Mammary epithelial cell (primary cell): ENCODE measurements at regions of chr2 and their contacts with region 1.

Region 1: GRCh38 chr2:216047397-216047796 is 34.0 kb upstream of the MREG start:
- DNase-seq: no peak
- H3K4me3 ChIP-seq: no peak overlapping the region
- H3K27ac ChIP-seq: no peak overlapping the region
- H3K4me1 ChIP-seq: no peaks in the 10 kb centered on the region
- H3K27me3 ChIP-seq: no peaks in the 10 kb centered on the region
- CTCF ChIP-seq: no peak

Region 2: GRCh38 chr2:216142540-216142939 is 95.1 kb after region 1 on chr2:
- CTCF ChIA-PET with region 1: interaction called, 25 read pairs
- dilution Hi-C with region 1: no loop called
- in situ Hi-C with region 1: no loop called
- intact Hi-C with region 1: no loop called
- DNase-seq: peak; percentile 4
- H3K4me3 ChIP-seq: no peak overlapping the region
- H3K27ac ChIP-seq: no peak overlapping the region
- H3K4me1 ChIP-seq: no peaks in the 10 kb centered on the region
- H3K27me3 ChIP-seq: no peaks in the 10 kb centered on the region
- CTCF ChIP-seq: no peak